Dendritic cell treated with granulocyte-macrophage colony-stimulating factor and Interleukin-4, amounts not matched to agents 40 ng/mL and 50 ng/mL, for 4 days (primary cell): ENCODE measurements at regions of chrX and their contacts with region 1.

Region 1: DNA sequence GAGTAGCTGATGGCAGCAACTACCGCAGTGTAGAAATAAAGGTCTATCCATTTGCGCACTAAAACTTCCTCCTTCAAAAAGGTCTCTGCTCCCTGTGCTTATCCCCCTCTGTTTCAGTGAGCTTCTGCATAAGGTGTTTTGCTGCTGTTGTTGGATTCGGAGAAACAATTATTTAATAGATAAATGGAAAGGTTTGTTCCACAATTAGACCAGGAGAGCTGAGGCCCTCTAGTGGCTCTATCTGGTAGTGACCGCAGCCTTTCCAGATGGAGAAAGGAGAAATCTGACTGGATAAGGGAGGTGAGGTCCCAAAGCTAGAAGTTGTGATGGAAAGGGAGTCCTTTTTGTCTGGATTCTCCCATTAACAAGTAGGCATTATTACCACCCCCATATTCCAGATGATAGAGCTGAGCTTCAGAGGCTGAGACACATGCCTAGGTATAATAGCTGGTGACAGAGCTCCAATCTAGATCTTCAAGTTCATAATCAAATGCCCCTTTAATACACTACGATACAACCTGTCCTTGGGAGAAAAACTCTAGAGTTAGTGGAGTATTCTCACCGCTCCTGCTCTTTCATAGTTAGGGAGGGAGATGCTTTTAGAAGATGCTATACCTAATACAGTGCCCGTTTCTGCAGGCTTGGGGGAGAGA is 5.1 kb upstream of the GABRQ start:
- H3K4me3 Mint-ChIP-seq: no peak overlapping the region
- H3K27ac Mint-ChIP-seq: no peak overlapping the region
- H3K4me1 Mint-ChIP-seq: no peaks in the 10 kb centered on the region
- H3K27me3 Mint-ChIP-seq: peaks cover 13% of the 10 kb centered on the region

Region 2: GRCh38 chrX:151151665-151152267 is 1480.8 kb before region 1 on chrX:
- intact Hi-C with region 1: loop called (anchors 5 kb)
- H3K4me3 Mint-ChIP-seq: no peak overlapping the region
- H3K27ac Mint-ChIP-seq: no peak overlapping the region
- H3K4me1 Mint-ChIP-seq: no peaks in the 10 kb centered on the region
- H3K27me3 Mint-ChIP-seq: peaks cover 7% of the 10 kb centered on the region

Region 3: DNA sequence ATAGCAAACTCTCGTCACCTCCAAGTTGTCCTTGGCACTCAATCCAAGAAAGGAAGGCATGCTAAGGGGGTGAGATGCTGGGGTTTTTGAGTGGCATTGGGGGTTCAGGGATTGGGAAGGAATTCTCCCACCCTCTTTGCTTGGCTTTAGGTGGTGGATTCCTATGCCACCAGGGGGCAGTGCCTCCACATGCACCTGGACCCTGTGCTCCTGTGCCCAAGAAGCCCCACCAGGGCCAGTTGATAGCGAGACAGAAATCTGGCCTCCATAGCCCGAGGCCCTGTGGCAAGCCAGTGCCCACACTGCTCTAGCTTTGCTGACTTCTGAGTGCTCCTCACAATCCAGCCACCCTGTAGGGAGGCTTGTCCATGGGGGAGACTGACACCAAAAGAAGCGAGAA is 918.7 kb before region 1 on chrX:
- intact Hi-C with region 1: loop called (anchors 5 kb)
- H3K4me3 Mint-ChIP-seq: no peak overlapping the region
- H3K27ac Mint-ChIP-seq: no peak overlapping the region
- H3K4me1 Mint-ChIP-seq: no peaks in the 10 kb centered on the region
- H3K27me3 Mint-ChIP-seq: peaks cover 5% of the 10 kb centered on the region

Region 4: DNA sequence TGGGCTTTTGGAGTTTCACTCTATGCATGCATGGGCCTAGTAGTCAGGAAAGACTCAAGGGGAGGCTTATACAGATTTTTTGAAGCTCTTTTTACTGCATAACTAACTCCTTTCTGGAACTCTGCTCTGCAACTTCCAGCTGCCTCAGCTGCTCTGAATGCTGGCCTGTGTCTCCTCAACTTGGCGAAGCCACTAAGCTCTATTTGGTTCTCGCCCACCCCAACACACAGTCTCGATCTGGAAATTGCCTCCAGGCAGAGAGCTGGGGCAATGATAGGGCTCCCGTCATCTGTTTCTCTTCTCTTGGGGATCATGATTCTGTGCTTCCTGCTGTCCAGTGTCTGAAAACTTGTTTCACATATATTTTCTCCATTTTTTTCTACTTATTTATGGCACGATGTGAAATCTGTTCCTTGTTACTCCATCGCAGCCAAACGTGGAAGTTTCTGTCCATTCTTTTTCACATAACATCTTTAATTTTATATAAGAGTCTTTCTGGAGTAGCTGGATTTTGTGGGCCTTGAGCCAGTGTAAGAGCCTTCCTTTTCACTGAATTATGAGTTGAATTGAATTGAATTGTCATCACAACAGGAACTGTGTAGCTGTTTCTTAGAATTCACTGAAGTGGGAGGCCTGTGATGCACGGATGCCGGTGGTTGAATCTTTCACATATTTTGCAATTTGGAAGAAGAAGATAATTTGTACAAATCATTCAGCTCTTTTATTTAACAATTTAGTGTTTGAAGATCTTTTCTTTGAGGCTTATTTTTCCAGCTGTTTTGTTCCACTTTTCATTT is 710.4 kb after region 1 on chrX:
- intact Hi-C with region 1: no loop called
- H3K4me3 Mint-ChIP-seq: no peak overlapping the region
- H3K27ac Mint-ChIP-seq: no peak overlapping the region
- H3K4me1 Mint-ChIP-seq: peaks cover 13% of the 10 kb centered on the region
- H3K27me3 Mint-ChIP-seq: no peaks in the 10 kb centered on the region